ENCODE measurements at regions of chr2 and their contacts with region 1.

Region 1: DNA sequence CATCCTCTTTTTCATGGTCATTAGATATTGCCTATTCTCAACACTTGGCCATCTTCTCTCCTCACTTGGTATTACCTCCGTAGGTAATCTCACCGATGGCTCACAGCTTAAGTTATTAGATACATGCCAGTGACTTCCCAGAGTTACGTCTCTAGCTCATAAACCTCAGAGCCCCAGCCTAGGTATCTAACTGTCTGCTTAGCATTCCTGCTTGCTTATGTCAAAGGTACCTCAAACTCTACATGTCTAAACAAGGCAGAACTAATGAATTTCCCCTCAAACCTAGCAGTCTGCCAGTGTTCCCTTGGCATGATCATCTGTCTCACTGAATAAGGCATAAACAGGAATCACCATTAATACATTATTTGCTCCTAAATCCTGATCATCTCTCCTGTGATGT is 27.7 kb upstream of the ZNF638 start:
- DNase-seq: no peak
- CTCF ChIP-seq: no peak

Region 2: GRCh38 chr2:70887550-70888246 is 416.2 kb before region 1 on chr2:
- in situ Hi-C with region 1: no loop called
- DNase-seq: peak; percentile 28
- CTCF ChIP-seq: no peak

Region 3: GRCh38 chr2:70948337-70949003 is 355.4 kb before region 1 on chr2:
- in situ Hi-C with region 1: no loop called
- DNase-seq: peak; percentile 83
- CTCF ChIP-seq: peak; percentile 81

Region 4: DNA sequence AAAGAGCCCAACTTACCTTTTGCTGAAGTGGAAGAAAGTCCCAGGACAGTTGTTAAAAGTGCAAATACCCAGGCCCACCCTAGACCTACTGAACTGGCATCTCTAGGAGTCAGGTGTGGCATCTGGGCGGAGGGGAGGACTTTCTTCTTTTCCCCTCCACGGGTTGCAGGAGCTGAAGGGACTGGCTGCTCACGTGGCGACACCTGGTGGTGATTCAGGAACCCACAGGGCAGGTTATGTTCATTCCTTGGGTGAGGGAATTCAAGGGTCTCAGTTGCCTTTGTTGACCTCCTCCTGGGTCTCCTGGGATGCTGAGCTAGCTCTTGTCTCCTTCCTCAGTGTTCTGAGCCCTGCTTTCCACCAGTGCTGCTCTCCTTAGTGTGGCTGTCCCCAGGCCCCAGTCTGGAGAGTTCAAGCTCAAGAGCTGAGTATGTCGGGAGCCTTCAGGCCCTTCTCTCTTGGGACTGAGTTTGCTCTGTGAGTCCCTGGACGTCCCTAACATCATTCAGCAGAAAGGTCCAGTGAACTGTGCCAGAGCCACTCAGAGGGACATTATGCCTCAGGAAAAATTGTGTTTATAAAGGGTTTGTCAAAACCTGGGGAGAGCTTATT is 206.5 kb after region 1 on chr2:
- in situ Hi-C with region 1: loop called (anchors 5 kb)
- DNase-seq: peak; percentile 88
- CTCF ChIP-seq: peak; percentile 85